ENCODE measurements at regions of chr6 and their contacts with region 1.

Region 1: GRCh38 chr6:36130667-36131510 is 576 bp downstream of the MAPK13 start:
- DNase-seq: peak; percentile 60
- ATAC-seq: peak; percentile 52
- H3K4me3 ChIP-seq: peak overlapping the region; percentile 75
- H3K27ac ChIP-seq: peak overlapping the region; percentile 51
- H3K4me1 ChIP-seq: peaks cover 39% of the 10 kb centered on the region
- H3K27me3 ChIP-seq: no peaks in the 10 kb centered on the region
- CTCF ChIP-seq: peak; percentile 38; the same call in 1 of the 2 replicates

Region 2: GRCh38 chr6:36153972-36154723 is 23.3 kb after region 1 on chr6:
- CTCF ChIA-PET with region 1: no interaction called
- POLR2A ChIA-PET with region 1: no interaction called
- intact Hi-C with region 1: no loop called
- DNase-seq: peak; percentile 93
- ATAC-seq: peak; percentile 80
- H3K4me3 ChIP-seq: no peak overlapping the region; the same call in 1 of the 2 replicates
- H3K27ac ChIP-seq: peak overlapping the region; percentile 12
- H3K4me1 ChIP-seq: peaks cover 17% of the 10 kb centered on the region
- H3K27me3 ChIP-seq: no peaks in the 10 kb centered on the region
- CTCF ChIP-seq: no peak

Region 3: GRCh38 chr6:36196880-36197548 is 66.1 kb after region 1 on chr6:
- CTCF ChIA-PET with region 1: no interaction called
- POLR2A ChIA-PET with region 1: no interaction called
- intact Hi-C with region 1: loop called (anchors 1 kb)
- DNase-seq: peak; percentile 98
- ATAC-seq: peak; percentile 93
- H3K4me3 ChIP-seq: peak overlapping the region; percentile 94
- H3K27ac ChIP-seq: no peak overlapping the region
- H3K4me1 ChIP-seq: peaks cover 7% of the 10 kb centered on the region; the same call in 1 of the 2 replicates
- H3K27me3 ChIP-seq: no peaks in the 10 kb centered on the region
- CTCF ChIP-seq: no peak